WTC11 (cell line): ENCODE measurements at regions of chr19 and their contacts with region 1.

Region 1: GRCh38 chr19:41373993-41374392 is 2.3 kb upstream of the TMEM91 start:
- DNase-seq: no peak
- ATAC-seq: no peak
- H3K4me3 Mint-ChIP-seq: no peak overlapping the region
- H3K27ac Mint-ChIP-seq: peak overlapping the region; percentile 83
- H3K4me1 Mint-ChIP-seq: peaks cover 17% of the 10 kb centered on the region
- H3K27me3 Mint-ChIP-seq: peaks cover 14% of the 10 kb centered on the region
- CTCF ChIP-seq: no peak

Region 2: GRCh38 chr19:41341669-41342490 is 32.1 kb before region 1 on chr19:
- CTCF ChIA-PET with region 1: interaction called, 10 read pairs
- POLR2A ChIA-PET with region 1: no interaction called
- DNase-seq: peak; percentile 56
- ATAC-seq: peak; percentile 89
- H3K4me3 Mint-ChIP-seq: no peak overlapping the region
- H3K27ac Mint-ChIP-seq: no peak overlapping the region
- H3K4me1 Mint-ChIP-seq: no peaks in the 10 kb centered on the region
- H3K27me3 Mint-ChIP-seq: no peaks in the 10 kb centered on the region
- CTCF ChIP-seq: no peak

Region 3: GRCh38 chr19:41413947-41414346 is 40.0 kb after region 1 on chr19:
- CTCF ChIA-PET with region 1: no interaction called
- POLR2A ChIA-PET with region 1: no interaction called
- DNase-seq: no peak
- ATAC-seq: no peak
- H3K4me3 Mint-ChIP-seq: no peak overlapping the region
- H3K27ac Mint-ChIP-seq: no peak overlapping the region
- H3K4me1 Mint-ChIP-seq: 0 out of 2 replicates have a peak, but pooled peaks cover 3% of the 10 kb centered on the region
- H3K27me3 Mint-ChIP-seq: no peaks in the 10 kb centered on the region; the same call in 1 of the 2 replicates
- CTCF ChIP-seq: no peak

Region 4: DNA sequence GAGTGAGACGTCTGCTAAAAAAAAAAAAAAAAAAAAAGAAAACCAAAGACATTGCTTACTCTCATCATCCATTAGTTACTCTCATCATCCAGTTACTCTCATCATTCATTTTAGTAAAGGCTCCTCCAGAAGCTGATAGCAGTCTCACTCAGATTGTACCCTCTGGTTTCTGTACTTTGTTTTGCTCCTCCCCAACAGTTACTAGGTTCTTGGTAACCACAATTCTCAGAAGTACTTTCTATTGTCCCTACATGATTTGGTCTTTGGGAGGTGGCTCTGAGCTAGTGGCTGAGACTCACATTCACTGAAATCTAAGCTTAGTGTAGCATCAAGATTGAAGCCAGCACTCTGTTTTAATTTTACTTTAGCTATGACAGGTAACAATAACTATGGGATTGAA is 83.2 kb after region 1 on chr19:
- CTCF ChIA-PET with region 1: no interaction called
- POLR2A ChIA-PET with region 1: no interaction called
- DNase-seq: no peak
- ATAC-seq: no peak
- H3K4me3 Mint-ChIP-seq: no peak overlapping the region
- H3K27ac Mint-ChIP-seq: no peak overlapping the region
- H3K4me1 Mint-ChIP-seq: no peaks in the 10 kb centered on the region
- H3K27me3 Mint-ChIP-seq: peaks cover 58% of the 10 kb centered on the region
- CTCF ChIP-seq: no peak

Region 5: GRCh38 chr19:41606215-41606837 is 232.3 kb after region 1 on chr19:
- CTCF ChIA-PET with region 1: no interaction called
- POLR2A ChIA-PET with region 1: no interaction called
- DNase-seq: peak; percentile 2
- ATAC-seq: no peak
- H3K4me3 Mint-ChIP-seq: no peak overlapping the region
- H3K27ac Mint-ChIP-seq: no peak overlapping the region
- H3K4me1 Mint-ChIP-seq: no peaks in the 10 kb centered on the region
- H3K27me3 Mint-ChIP-seq: peaks cover 92% of the 10 kb centered on the region
- CTCF ChIP-seq: no peak